Sigmoid colon (tissue), 7 donors: ENCODE measurements at regions of chr11 and their contacts with region 1.

Region 1: GRCh38 chr11:65117216-65118096 is at the start of gene ZNHIT2:
- DNase-seq: peak; percentile 100
- H3K4me3 ChIP-seq: peak within 1 kb of the TSS; percentile 68 to 98 (median 89)
- H3K27ac ChIP-seq: peak within 1 kb of the TSS; percentile 87 to 97 (median 90)
- H3K4me1 ChIP-seq: peaks cover 0 to 57% (median 45%) of the 10 kb centered on the region in 4 donors
- H3K27me3 ChIP-seq: no peaks in the 10 kb centered on the region
- CTCF ChIP-seq: peak; percentile 84 to 97 (median 92)
- EP300 ChIP-seq: peak in 1 of 4 donors; percentile 35
- POLR2A ChIP-seq: peak; percentile 33 to 36
- total RNA-seq, gene ZNHIT2: 13.6 to 16.3 (median 15.0) TPM

Region 2: DNA sequence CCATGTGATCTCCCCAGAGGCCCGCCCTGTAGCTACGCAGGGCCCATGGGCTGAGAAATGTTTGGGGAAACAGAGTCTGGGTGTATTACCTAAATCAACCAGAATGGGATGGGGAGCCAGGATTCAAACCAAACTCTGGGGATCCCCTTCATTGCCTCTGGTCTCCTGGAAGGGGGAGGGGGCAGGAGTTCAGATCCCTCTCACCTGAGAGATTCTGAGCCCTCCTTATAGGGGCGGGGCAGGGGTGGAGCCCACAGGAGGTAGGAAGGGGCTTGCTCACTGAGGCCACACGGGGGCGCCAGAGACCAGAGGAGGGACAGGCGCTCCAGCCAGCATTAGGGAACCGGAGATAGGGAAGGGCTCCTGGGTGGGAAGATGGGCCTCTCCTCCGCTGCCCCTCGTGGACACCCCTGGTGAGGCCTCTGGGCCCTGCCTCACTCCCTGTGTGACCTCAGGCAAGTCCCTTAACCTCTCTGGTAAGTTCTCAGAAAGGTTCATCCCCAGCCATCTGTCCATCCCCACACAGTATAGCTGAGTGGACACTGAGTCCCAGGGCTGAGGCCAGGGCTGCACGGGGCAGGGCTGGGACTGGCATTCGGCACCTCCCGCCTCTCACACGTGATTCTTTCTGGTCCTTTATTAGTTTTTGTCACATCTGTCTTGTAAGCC is 270.3 kb before region 1 on chr11:
- intact Hi-C with region 1: loop called (anchors 10 kb)
- DNase-seq: peak; percentile 96
- H3K4me3 ChIP-seq: no peak overlapping the region
- H3K27ac ChIP-seq: peak overlapping the region in 2 of 4 donors; percentile 10 to 22
- H3K4me1 ChIP-seq: peaks cover 0 to 52% (median 35%) of the 10 kb centered on the region in 4 donors
- H3K27me3 ChIP-seq: peaks cover 0 to 10% (median 0%) of the 10 kb centered on the region in 3 donors
- CTCF ChIP-seq: peak; percentile 92 to 97 (median 96)
- EP300 ChIP-seq: no peak
- POLR2A ChIP-seq: no peak

Region 3: GRCh38 chr11:64924102-64924851 is 193.2 kb before region 1 on chr11 and contains the start of gene PPP2R5B:
- intact Hi-C with region 1: loop called (anchors 1 kb)
- DNase-seq: peak; percentile 98
- H3K4me3 ChIP-seq: peak within 1 kb of the TSS; percentile 64 to 93 (median 84)
- H3K27ac ChIP-seq: peak within 1 kb of the TSS; percentile 89 to 97 (median 94)
- H3K4me1 ChIP-seq: peaks cover 0 to 23% (median 22%) of the 10 kb centered on the region in 4 donors
- H3K27me3 ChIP-seq: no peaks in the 10 kb centered on the region
- CTCF ChIP-seq: no peak
- EP300 ChIP-seq: peak in 1 of 4 donors; percentile 49
- POLR2A ChIP-seq: peak; percentile 67 to 81
- total RNA-seq, gene PPP2R5B: 17.8 to 27.3 (median 21.3) TPM

Region 4: GRCh38 chr11:65013692-65014145 is 103.7 kb before region 1 on chr11:
- intact Hi-C with region 1: loop called (anchors 2 kb)
- DNase-seq: peak; percentile 96
- H3K4me3 ChIP-seq: peak overlapping the region; percentile 60 to 92 (median 81)
- H3K27ac ChIP-seq: peak overlapping the region; percentile 99 to 100 (median 100)
- H3K4me1 ChIP-seq: peaks cover 0 to 25% (median 19%) of the 10 kb centered on the region in 4 donors
- H3K27me3 ChIP-seq: no peaks in the 10 kb centered on the region
- CTCF ChIP-seq: peak in 3 of 4 experiments; percentile 30 to 94 (median 82)
- EP300 ChIP-seq: no peak
- POLR2A ChIP-seq: peak; percentile 40 to 53

Region 5: GRCh38 chr11:65027213-65028067 is 90.0 kb before region 1 on chr11 and contains the start of gene SNX15:
- intact Hi-C with region 1: loop called (anchors 5 kb)
- DNase-seq: peak; percentile 97
- H3K4me3 ChIP-seq: peak within 1 kb of the TSS; percentile 57 to 68 (median 62)
- H3K27ac ChIP-seq: peak within 1 kb of the TSS; percentile 86 to 95 (median 90)
- H3K4me1 ChIP-seq: peaks cover 0 to 21% (median 16%) of the 10 kb centered on the region in 4 donors
- H3K27me3 ChIP-seq: no peaks in the 10 kb centered on the region
- CTCF ChIP-seq: peak in 3 of 4 experiments; percentile 64 to 78 (median 73)
- EP300 ChIP-seq: no peak
- POLR2A ChIP-seq: peak; percentile 63 to 76
- total RNA-seq, gene SNX15: 20.1 to 36.6 (median 25.2) TPM

Region 6: DNA sequence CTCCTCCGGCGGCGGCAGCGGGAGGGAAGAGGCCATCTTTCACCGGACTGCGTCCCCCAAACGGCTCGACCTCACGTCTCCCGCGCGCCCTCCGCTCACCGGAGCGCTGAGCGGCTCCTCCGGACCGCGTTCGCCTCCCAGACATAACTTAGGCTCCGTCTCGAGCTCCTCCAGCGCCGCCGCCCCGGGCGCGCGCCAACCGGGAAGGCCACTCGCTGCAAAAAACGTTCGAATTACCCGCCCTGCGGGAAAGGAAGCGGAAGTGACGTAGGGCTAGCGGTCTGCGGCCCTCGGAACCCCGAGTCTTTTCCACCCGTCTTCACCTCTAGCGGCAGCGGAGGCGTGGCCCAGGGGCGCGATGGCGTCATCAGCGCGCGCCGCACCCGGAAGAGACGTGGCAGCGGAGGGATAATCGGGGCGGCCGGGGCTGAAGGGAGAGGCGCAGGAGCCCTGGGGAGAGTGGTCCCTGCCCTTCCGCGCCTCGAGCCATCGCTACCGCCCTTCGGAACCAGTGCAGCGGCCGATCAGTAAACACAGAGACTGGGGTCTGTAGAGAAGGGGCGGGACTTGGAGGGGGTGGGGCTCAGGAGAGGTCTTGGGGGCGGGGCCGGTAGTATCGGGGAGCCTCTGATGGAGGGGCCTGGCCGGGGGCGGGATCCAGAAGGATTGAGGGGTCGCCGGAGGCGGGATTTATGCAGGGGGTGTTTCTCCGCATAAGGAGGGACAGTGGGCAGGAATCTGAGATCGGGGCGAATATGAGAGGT is 33.4 kb before region 1 on chr11 and contains the starts of genes CDCA5 and ZFPL1:
- intact Hi-C with region 1: loop called (anchors 1 kb)
- DNase-seq: peak; percentile 97
- H3K4me3 ChIP-seq: peak within 1 kb of the TSS; percentile 78 to 84 (median 82)
- H3K27ac ChIP-seq: peak within 1 kb of the TSS; percentile 88 to 95 (median 92)
- H3K4me1 ChIP-seq: peaks cover 0 to 23% (median 20%) of the 10 kb centered on the region in 4 donors
- H3K27me3 ChIP-seq: no peaks in the 10 kb centered on the region
- CTCF ChIP-seq: no peak
- EP300 ChIP-seq: peak in 2 of 4 donors; percentile 33 to 82
- POLR2A ChIP-seq: peak in 1 of 2 donors; percentile 48
- total RNA-seq, gene CDCA5: 0.33 to 7.5 (median 3.3) TPM in 3 of 4 donors, not detected in the other
- total RNA-seq, gene ZFPL1: 26.1 to 38.8 (median 36.9) TPM

Region 7: DNA sequence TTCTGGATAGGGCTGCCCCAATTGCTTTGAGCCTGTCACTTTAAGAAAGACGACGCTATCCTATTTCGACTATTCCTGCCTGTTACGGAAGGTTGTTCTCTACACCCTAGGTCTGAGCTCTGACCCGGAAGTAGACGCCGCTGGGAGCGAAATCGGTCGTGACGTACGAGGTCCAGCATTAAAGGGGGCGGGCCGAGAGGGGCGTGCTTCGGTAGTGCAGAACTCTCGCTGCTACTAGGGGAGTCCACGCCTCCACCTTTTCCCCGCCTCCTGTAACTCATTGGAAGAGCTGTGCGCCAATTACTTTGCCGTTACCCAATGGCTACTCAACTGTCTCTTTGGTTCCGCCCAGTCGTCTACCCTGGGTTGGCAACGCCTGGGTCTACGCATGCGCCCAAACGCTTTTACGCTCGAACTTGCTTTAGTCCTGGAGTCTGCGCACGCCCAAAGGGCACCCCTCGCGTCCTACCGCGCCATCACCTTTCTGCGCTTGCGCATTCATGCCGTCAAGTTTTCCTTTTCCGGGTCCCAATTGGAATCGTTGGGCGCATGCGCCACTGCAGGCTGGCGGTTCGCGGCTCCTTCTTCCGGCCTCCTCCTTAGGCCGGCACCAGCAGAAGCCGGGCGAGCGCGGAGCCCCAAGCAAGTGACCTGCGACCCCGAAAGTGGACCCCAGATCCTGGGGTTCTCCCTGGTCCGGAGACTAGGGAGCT is 497.9 kb after region 1 on chr11 and contains the start of gene PCNX3:
- intact Hi-C with region 1: loop called (anchors 10 kb)
- DNase-seq: peak; percentile 100
- H3K4me3 ChIP-seq: peak within 1 kb of the TSS; percentile 74 to 98 (median 88)
- H3K27ac ChIP-seq: peak within 1 kb of the TSS; percentile 89 to 95 (median 92)
- H3K4me1 ChIP-seq: peaks cover 0 to 58% (median 47%) of the 10 kb centered on the region in 4 donors
- H3K27me3 ChIP-seq: no peaks in the 10 kb centered on the region
- CTCF ChIP-seq: no peak
- EP300 ChIP-seq: peak in 1 of 4 donors; percentile 67
- POLR2A ChIP-seq: peak; percentile 52 to 65
- total RNA-seq, gene PCNX3: 10.7 to 21.3 (median 14.3) TPM